A549 (cell line): ENCODE measurements at regions of chr2 and their contacts with region 1.

Region 1: GRCh38 chr2:170822290-170823087 is 5.8 kb downstream of the GAD1 start:
- DNase-seq: peak in 1 of 2 experiments; percentile 37
- ATAC-seq: peak in 1 of 2 experiments; percentile 71; a peak in 3 of 6 replicates
- H3K4me3 ChIP-seq: peak overlapping the region; percentile 37
- H3K27ac ChIP-seq: no peak overlapping the region
- H3K4me1 ChIP-seq: peaks cover 36% of the 10 kb centered on the region
- CTCF ChIP-seq: peak; percentile 43
- EP300 ChIP-seq: no peak
- POLR2A ChIP-seq: no peak
- RAD21 ChIP-seq: peak in 1 of 2 experiments; percentile 31; a peak in 3 of 5 replicates

Region 2: DNA sequence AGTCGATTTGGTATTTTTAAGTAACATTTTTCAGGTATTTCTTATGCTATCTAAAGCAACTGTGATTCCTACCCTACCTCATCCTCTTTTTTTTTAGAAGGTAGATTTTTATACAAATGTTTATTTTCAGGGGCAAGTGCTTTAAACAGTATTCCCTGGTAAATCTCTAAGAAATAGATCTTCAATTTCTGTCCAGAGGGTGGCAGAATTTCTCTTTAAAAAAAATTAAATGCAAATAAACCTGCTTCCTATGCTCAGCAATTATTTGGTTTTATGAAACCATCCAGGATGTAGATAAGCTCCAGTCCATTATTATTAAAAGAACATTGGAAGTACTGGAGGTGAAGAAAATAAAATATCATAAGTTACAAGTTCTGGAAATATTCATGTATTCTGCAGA is 452.6 kb before region 1 on chr2:
- CTCF ChIA-PET with region 1: interaction called, 95 read pairs
- POLR2A ChIA-PET with region 1: no interaction called
- DNase-seq: peak; percentile 2 to 30
- ATAC-seq: peak in 1 of 2 experiments; percentile 51; a peak in 1 of 6 replicates
- H3K4me3 ChIP-seq: no peak overlapping the region
- H3K27ac ChIP-seq: no peak overlapping the region
- H3K4me1 ChIP-seq: no peaks in the 10 kb centered on the region
- CTCF ChIP-seq: peak; percentile 55
- EP300 ChIP-seq: no peak
- POLR2A ChIP-seq: no peak
- RAD21 ChIP-seq: peak; percentile 42 to 62; a peak in 4 of 5 replicates

Region 3: DNA sequence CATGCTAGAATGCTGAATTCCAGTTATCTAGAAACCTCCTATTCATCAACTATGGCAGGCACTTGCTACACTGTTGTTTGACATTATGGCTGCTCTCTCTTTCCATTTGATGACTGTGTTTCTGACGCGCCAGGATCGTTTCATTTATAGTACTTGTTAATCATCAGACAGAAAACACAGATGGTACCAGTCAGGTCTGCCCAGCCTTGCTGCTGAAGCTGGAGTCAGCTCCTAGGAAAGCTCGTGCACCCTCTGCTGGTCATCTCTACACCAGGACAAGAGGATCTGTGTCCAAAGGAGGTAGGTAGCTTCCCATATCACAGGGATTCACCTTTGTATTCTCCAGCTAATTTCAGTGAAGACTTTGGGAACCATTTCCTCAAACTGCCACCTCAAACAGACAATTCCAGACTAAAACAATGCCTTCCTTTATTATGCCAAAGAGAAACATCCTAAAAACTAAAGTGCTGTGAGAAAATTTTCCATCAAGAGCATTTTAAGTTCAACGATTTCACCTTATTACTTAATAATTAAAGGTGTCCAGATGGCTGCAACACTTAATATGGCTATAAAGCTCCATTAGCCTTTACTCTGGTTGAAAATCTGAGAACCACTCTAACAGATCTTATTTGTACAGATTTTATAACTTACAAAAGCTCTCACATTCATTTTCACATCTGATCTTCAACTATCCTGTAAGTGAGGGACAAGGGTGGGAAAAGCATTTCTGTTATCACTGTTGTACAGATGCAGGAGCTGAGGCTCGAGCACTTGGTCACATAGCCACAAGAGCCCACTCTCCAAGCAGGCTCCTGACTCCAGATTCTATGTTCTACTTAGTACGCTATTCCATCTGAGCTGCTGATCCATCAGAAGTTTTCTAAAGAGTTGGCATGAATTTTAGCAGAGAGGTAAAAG is 593.8 kb after region 1 on chr2:
- CTCF ChIA-PET with region 1: no interaction called
- POLR2A ChIA-PET with region 1: no interaction called
- DNase-seq: peak; percentile 74 to 94
- ATAC-seq: peak; percentile 100
- H3K4me3 ChIP-seq: no peak overlapping the region
- H3K27ac ChIP-seq: peak overlapping the region in 1 of 2 experiments; percentile 44; a peak in 3 of 6 replicates
- H3K4me1 ChIP-seq: peaks cover 10% of the 10 kb centered on the region; the same call in 2 of the 3 replicates
- CTCF ChIP-seq: peak; percentile 93
- EP300 ChIP-seq: no peak
- POLR2A ChIP-seq: no peak
- RAD21 ChIP-seq: peak; percentile 91 to 93